ENCODE measurements at regions of chr4 and their contacts with region 1.

Region 1: GRCh38 chr4:37977471-37978247 is 17.5 kb downstream of the PTTG2 start:
- DNase-seq: peak; percentile 71
- H3K4me3 Mint-ChIP-seq: peak overlapping the region; percentile 81
- H3K27ac Mint-ChIP-seq: peak overlapping the region; percentile 78
- H3K4me1 Mint-ChIP-seq: peaks cover 28% of the 10 kb centered on the region
- H3K27me3 Mint-ChIP-seq: no peaks in the 10 kb centered on the region

Region 2: DNA sequence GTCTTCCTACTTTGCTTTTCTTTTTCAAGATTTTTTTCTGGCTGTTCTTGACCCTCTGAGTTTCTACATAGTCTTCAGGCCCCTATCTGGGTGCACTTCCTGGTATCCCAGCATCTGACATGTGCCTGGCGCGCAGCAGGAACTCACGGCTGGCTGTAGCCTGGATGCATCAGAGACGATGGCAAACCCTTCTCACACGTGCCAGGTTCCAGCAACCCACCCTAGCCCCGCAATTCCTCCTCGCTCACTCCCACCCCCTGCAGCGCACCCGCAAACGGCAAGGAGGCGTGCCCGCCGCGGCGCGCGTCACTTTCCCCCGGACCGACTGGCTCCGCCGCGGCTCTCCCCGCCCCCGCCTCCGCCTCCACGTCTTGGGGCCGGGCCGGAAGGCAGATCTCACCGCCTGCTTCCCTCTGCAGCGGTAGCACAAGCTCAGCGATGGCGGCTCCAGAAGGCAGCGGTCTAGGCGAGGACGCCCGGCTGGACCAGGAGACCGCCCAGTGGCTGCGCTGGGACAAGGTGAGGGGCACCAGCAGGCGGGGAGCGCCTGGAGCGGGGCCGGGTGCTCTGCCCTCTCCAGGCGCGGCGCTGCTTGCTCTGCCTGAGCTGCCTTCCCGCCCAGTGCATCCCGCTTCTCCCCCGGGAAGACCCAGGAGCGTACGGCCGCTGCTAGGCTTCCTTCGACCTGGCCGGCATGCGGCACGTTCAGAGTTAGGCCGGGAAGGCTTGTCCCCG is 151.2 kb before region 1 on chr4 and contains the start of gene PGM2:
- intact Hi-C with region 1: loop called (anchors 1 kb)
- DNase-seq: peak; percentile 88
- H3K4me3 Mint-ChIP-seq: peak within 1 kb of the TSS; percentile 91
- H3K27ac Mint-ChIP-seq: peak within 1 kb of the TSS; percentile 87
- H3K4me1 Mint-ChIP-seq: peaks cover 43% of the 10 kb centered on the region
- H3K27me3 Mint-ChIP-seq: peaks cover 5% of the 10 kb centered on the region
- total RNA-seq, gene PGM2: 49.3 and 52.5 TPM in 2 replicates

Region 3: GRCh38 chr4:37928426-37929416 is 48.9 kb before region 1 on chr4:
- intact Hi-C with region 1: loop called (anchors 1 kb)
- DNase-seq: no peak
- H3K4me3 Mint-ChIP-seq: no peak overlapping the region
- H3K27ac Mint-ChIP-seq: peak overlapping the region; percentile 7
- H3K4me1 Mint-ChIP-seq: peaks cover 32% of the 10 kb centered on the region
- H3K27me3 Mint-ChIP-seq: no peaks in the 10 kb centered on the region

Measured in activated T-helper 2 cell treated with anti-CD3 and anti-CD28 coated beads, Interferon-gamma antibody, Interleukin-2, Interleukin-4, amounts not matched to agents 10 μg/mL and 5 μg/mL and 100 μg/mL, durations not matched to agents 14 hours and 24 hours and 36 hours (primary cell).